AG04449 (cell line): ENCODE measurements at regions of chr6 and their contacts with region 1.

Region 1: GRCh38 chr6:145633981-145634627 is 101.2 kb downstream of the EPM2A start:
- DNase-seq: peak; percentile 34
- H3K4me3 ChIP-seq: no peak overlapping the region
- CTCF ChIP-seq: peak; percentile 82

Region 2: DNA sequence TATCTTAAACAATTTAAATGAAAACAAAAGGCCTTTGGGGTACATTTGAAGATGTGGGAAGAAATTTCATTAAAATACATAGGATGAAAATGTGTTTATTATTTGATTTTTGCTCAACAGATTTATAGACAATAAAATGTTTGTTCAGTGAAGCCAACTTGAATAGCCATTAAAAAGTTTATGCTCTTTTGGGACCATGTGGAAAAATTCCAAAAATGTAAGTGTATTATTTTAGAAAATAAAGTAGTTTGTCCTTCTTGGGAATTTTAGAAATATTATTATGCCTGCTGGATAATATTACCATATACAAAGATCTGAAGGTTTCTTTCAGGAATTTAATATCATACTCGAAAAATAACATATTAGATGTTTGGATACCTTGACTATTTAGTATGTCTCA is 30.1 kb before region 1 on chr6:
- CTCF ChIA-PET with region 1: interaction called, 20 read pairs
- POLR2A ChIA-PET with region 1: no interaction called
- DNase-seq: no peak
- H3K4me3 ChIP-seq: no peak overlapping the region
- CTCF ChIP-seq: no peak

Region 3: GRCh38 chr6:145621776-145622175 is 12.3 kb before region 1 on chr6:
- CTCF ChIA-PET with region 1: interaction called, 45 read pairs
- POLR2A ChIA-PET with region 1: no interaction called
- DNase-seq: no peak
- H3K4me3 ChIP-seq: no peak overlapping the region
- CTCF ChIP-seq: no peak

Region 4: DNA sequence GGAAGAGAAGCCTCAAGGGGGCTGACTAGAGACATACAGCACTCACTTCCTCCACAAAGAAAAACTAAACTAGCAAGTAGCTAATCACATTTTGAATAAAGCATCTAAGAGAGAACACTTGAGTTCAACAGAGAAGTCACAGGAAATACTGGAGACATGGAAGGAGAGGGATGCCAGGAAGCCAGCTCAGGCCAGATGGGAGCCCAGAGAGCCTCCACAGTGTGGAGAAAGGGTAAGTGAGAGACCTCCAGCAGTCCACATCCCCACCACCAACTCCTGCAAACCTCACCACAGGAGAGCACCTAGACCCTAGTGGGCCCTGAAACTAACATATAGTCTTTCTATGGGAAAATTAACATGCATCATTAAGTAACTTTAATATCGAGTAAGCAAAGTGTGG is 22.0 kb after region 1 on chr6:
- CTCF ChIA-PET with region 1: interaction called, 21 read pairs
- POLR2A ChIA-PET with region 1: no interaction called
- DNase-seq: no peak
- H3K4me3 ChIP-seq: no peak overlapping the region
- CTCF ChIP-seq: no peak